ENCODE measurements at regions of chr1 and their contacts with region 1.

Region 1: GRCh38 chr1:68120136-68120791 is 69.8 kb upstream of the DIRAS3 start:
- DNase-seq: no peak
- ATAC-seq: no peak
- H3K4me3 Mint-ChIP-seq: no peak overlapping the region
- H3K27ac Mint-ChIP-seq: no peak overlapping the region
- H3K4me1 Mint-ChIP-seq: no peaks in the 10 kb centered on the region
- H3K27me3 Mint-ChIP-seq: no peaks in the 10 kb centered on the region
- CTCF ChIP-seq: peak; percentile 39

Region 2: GRCh38 chr1:67418839-67419586 is 701.3 kb before region 1 on chr1:
- CTCF ChIA-PET with region 1: no interaction called
- POLR2A ChIA-PET with region 1: no interaction called
- intact Hi-C with region 1: no loop called
- DNase-seq: no peak
- ATAC-seq: no peak
- H3K4me3 Mint-ChIP-seq: no peak overlapping the region
- H3K27ac Mint-ChIP-seq: no peak overlapping the region
- H3K4me1 Mint-ChIP-seq: peaks cover 5% of the 10 kb centered on the region
- H3K27me3 Mint-ChIP-seq: no peaks in the 10 kb centered on the region
- CTCF ChIP-seq: no peak

Region 3: GRCh38 chr1:67535474-67535873 is 584.8 kb before region 1 on chr1:
- CTCF ChIA-PET with region 1: no interaction called
- POLR2A ChIA-PET with region 1: no interaction called
- intact Hi-C with region 1: loop called (anchors 10 kb)
- DNase-seq: no peak
- ATAC-seq: no peak
- H3K4me3 Mint-ChIP-seq: no peak overlapping the region
- H3K27ac Mint-ChIP-seq: no peak overlapping the region
- H3K4me1 Mint-ChIP-seq: peaks cover 3% of the 10 kb centered on the region
- H3K27me3 Mint-ChIP-seq: peaks cover 12% of the 10 kb centered on the region
- CTCF ChIP-seq: no peak

Region 4: GRCh38 chr1:68085752-68086151 is 34.5 kb before region 1 on chr1:
- CTCF ChIA-PET with region 1: no interaction called
- POLR2A ChIA-PET with region 1: no interaction called
- intact Hi-C with region 1: no loop called
- DNase-seq: no peak
- ATAC-seq: no peak
- H3K4me3 Mint-ChIP-seq: no peak overlapping the region
- H3K27ac Mint-ChIP-seq: no peak overlapping the region
- H3K4me1 Mint-ChIP-seq: no peaks in the 10 kb centered on the region
- H3K27me3 Mint-ChIP-seq: peaks cover 5% of the 10 kb centered on the region
- CTCF ChIP-seq: no peak

Region 5: DNA sequence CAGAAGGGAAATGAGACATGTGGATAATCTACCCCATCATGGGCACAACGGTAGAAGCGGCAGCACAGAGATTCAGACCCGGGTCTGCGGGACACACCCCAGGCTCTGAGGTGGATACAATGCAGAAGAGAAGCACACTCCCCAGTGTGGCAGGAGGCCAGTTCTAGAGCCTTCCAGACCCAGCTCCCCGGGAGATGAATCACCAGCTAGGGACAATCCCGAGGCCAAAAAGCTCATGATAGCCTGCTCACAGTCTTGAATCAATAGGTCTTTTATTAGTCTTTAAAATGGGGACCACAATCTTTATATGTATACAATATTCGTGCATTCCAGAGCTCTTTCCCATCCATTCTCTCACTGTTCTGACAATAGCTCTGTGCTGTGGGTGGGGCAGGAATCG is 12.5 kb before region 1 on chr1:
- CTCF ChIA-PET with region 1: interaction called, 13 read pairs
- POLR2A ChIA-PET with region 1: interaction called, 3 read pairs
- intact Hi-C with region 1: no loop called
- DNase-seq: no peak
- ATAC-seq: no peak
- H3K4me3 Mint-ChIP-seq: no peak overlapping the region
- H3K27ac Mint-ChIP-seq: no peak overlapping the region
- H3K4me1 Mint-ChIP-seq: no peaks in the 10 kb centered on the region
- H3K27me3 Mint-ChIP-seq: peaks cover 5% of the 10 kb centered on the region
- CTCF ChIP-seq: no peak

Region 6: DNA sequence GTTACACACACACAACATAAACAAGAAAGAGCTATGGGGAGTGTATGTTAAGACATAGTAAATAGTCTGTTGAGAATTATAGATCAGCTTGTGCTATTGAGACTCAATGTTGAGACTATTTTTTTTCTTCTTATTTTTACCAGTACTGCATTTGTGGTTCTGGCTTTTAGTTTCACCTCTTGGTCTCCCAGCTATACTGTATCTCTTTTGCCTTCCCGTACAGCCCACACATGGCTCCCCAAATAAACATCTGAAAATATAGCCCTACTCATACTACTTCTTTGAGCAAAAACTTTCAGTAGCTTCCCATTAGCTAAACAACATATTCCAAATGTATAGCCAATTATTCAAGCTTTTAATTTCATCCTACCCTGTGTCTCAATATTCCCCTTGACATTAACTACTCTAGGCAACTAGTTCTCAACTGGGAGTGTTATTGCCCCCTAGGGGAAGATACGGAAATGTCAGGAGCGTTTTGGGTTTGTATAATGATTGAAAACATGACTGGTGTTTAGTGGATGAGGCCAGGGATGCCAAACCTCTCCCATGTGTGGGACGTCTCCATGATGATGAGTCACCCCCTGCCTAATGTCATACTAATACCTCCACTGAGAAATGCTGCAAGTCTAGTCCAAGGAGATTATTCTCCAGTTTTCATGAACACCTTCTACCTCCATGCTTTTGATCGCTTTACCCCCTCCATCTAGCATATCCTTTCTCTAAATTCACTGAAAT is 322.7 kb after region 1 on chr1:
- CTCF ChIA-PET with region 1: interaction called, 76 read pairs
- POLR2A ChIA-PET with region 1: no interaction called
- intact Hi-C with region 1: loop called (anchors 1 kb)
- DNase-seq: no peak
- ATAC-seq: no peak
- H3K4me3 Mint-ChIP-seq: no peak overlapping the region
- H3K27ac Mint-ChIP-seq: no peak overlapping the region
- H3K4me1 Mint-ChIP-seq: peaks cover 4% of the 10 kb centered on the region
- H3K27me3 Mint-ChIP-seq: peaks cover 9% of the 10 kb centered on the region
- CTCF ChIP-seq: peak; percentile 40

Region 7: DNA sequence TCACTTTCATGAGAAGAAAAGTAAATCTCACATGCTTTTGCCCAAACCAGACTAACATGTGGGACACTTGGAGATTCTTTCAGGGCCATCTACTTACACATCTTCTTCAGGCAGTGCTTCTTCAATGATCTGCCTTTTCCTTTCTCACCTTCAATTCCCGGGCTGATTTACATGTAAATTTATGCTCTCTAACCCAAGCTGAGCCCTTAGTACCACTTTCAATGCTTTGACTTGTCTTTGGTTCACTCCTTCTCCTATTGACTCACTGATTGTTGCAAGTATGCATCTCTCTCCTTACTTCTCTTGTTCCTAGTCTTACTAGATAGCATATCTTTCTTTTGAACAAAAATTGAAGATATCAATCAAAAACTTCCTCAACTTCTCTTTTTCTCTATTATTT is 530.9 kb after region 1 on chr1:
- CTCF ChIA-PET with region 1: no interaction called
- POLR2A ChIA-PET with region 1: no interaction called
- intact Hi-C with region 1: no loop called
- DNase-seq: no peak
- ATAC-seq: no peak
- H3K4me3 Mint-ChIP-seq: no peak overlapping the region
- H3K27ac Mint-ChIP-seq: no peak overlapping the region
- H3K4me1 Mint-ChIP-seq: no peaks in the 10 kb centered on the region
- H3K27me3 Mint-ChIP-seq: no peaks in the 10 kb centered on the region
- CTCF ChIP-seq: no peak

Region 8: DNA sequence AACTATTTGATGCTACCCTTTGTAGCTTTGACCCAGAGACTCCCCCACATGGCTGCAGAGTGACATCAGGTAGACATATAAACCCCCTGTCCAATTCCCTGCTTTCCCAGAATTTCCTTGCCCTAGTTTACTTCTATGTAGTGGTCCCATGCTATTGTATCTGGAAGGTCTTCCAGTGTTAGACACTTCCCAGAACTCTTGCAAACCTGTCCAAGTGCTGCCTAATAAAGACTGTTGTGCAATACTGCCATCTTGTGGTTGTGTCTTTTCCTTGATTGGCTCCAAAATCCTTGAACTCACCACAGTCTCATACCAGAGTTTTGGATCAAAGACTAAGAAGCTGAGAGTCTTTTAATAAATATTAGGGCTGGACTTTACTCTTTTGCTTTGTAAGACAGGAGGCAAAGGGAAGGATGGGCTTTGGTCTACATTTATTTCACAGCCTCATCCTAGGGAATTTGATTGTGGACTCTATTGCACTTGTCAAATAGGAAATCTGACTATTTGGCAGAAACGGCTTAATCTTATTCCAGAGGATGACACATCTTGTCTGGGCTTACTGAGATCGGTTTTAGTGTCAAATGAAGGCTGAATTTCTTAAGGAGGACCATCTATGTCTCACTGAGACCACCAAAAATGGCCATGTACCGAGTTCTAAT is 1617.4 kb after region 1 on chr1:
- CTCF ChIA-PET with region 1: interaction called, 47 read pairs
- POLR2A ChIA-PET with region 1: no interaction called
- intact Hi-C with region 1: loop called (anchors 1 kb)
- DNase-seq: no peak
- ATAC-seq: no peak
- H3K4me3 Mint-ChIP-seq: no peak overlapping the region
- H3K27ac Mint-ChIP-seq: no peak overlapping the region
- H3K4me1 Mint-ChIP-seq: no peaks in the 10 kb centered on the region
- H3K27me3 Mint-ChIP-seq: no peaks in the 10 kb centered on the region
- CTCF ChIP-seq: no peak